Breast epithelium (tissue), 4 donors: ENCODE measurements at regions of chr4 and their contacts with region 1.

Region 1: GRCh38 chr4:13151194-13151593 is 332.9 kb downstream of the RAB28 start:
- DNase-seq: no peak
- H3K4me3 ChIP-seq: no peak overlapping the region
- H3K27ac ChIP-seq: no peak overlapping the region
- H3K4me1 ChIP-seq: no peaks in the 10 kb centered on the region
- H3K27me3 ChIP-seq: no peaks in the 10 kb centered on the region
- CTCF ChIP-seq: no peak
- POLR2A ChIP-seq: no peak

Region 2: DNA sequence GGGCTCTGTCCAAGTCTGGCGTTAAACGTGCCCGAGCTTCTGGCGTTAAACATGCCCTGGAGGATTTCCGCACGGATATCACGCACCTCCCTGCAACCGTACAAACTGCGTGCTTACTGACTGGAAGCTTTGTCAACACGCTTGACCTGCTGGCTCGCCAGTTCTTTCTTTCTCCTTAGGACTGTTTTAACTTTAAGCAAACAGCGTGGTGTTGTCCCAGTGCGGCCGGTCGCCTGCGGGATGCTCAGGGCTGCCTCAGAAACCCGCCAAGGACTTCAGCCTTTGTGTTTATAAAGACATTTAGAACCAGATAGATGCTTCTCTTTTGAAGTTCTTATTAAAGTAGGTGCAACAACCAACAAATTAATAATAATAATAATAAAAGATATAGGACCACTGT is 613.0 kb before region 1 on chr4:
- intact Hi-C with region 1: no loop called
- DNase-seq: no peak
- H3K4me3 ChIP-seq: no peak overlapping the region
- H3K27ac ChIP-seq: no peak overlapping the region
- H3K4me1 ChIP-seq: no peaks in the 10 kb centered on the region
- H3K27me3 ChIP-seq: no peaks in the 10 kb centered on the region
- CTCF ChIP-seq: no peak
- POLR2A ChIP-seq: no peak

Region 3: GRCh38 chr4:13166214-13166613 is 15.0 kb after region 1 on chr4:
- intact Hi-C with region 1: loop called (anchors 1 kb)
- DNase-seq: no peak
- H3K4me3 ChIP-seq: no peak overlapping the region
- H3K27ac ChIP-seq: no peak overlapping the region
- H3K4me1 ChIP-seq: no peaks in the 10 kb centered on the region
- H3K27me3 ChIP-seq: no peaks in the 10 kb centered on the region
- CTCF ChIP-seq: no peak
- POLR2A ChIP-seq: no peak